Cardiac septum (tissue), 1 donor: ENCODE measurements at regions of chr6 and their contacts with region 1.

Region 1: DNA sequence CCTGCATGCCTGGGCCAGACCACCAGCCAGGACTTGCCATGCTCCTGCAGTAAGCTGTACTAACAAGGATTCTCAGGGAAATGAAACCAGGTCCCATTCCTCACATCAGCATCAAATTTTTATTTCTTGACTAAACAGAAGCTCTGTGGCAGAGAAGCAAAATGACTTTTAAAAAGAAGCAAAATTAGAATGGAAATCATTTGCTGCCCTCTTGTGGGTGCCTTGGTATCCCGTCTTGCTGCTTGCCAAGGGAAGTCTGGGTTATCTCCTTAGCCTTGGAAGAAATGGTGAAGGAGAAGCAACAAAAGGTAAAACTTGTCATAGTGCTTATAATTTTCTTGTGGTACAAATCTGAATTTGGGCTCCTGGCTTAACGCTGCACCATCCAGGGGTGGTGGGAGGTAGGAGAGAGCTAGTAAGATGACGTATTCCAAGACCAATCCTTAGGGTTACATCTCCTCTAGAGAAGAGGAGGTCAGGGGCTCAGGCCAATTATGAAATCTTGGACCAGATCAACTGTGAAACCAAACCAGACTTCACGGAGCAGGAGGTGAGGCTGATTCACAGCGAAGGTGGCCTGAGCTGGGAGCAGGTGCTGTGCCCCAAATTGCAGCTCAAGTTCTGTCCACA is 107.5 kb downstream of the FAXC start:
- DNase-seq: no peak

Region 2: DNA sequence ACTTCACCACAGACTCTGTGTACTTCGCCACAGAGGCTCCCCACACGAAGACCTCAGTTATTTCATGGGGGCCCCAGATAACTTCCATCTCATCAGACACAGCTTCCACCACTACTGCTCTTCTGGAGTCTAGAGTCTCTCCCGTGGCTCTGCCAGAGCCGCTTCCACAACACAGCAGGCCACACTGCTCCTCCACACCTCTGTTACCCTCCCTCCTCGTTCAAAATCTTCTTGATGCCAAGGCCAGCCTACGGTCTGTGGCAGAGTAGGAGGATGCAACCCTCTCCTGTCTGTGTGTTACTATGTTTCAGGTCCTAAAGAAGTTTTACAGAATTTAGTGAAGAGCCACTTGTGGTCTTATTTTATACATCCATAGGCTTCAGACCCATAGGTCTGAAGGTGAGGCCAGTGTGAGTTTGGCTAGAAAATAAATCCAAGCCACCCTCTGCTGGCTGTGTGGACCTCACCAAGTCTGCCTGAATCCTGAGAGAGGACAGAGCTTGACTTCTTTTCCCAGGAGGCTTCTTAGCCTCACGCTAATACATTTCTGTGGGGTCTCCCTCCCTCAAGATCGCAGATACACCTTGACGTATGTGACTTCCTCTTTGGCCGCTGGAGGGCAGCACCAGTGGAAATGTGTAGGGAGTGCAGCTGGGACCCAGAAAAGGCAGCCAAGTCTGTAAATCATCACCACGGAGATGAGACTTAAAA is 90.2 kb before region 1 on chr6:
- intact Hi-C with region 1: loop called (anchors 5 kb)
- DNase-seq: no peak